GM10248 (cell line): ENCODE measurements at regions of chrX and their contacts with region 1.

Region 1: DNA sequence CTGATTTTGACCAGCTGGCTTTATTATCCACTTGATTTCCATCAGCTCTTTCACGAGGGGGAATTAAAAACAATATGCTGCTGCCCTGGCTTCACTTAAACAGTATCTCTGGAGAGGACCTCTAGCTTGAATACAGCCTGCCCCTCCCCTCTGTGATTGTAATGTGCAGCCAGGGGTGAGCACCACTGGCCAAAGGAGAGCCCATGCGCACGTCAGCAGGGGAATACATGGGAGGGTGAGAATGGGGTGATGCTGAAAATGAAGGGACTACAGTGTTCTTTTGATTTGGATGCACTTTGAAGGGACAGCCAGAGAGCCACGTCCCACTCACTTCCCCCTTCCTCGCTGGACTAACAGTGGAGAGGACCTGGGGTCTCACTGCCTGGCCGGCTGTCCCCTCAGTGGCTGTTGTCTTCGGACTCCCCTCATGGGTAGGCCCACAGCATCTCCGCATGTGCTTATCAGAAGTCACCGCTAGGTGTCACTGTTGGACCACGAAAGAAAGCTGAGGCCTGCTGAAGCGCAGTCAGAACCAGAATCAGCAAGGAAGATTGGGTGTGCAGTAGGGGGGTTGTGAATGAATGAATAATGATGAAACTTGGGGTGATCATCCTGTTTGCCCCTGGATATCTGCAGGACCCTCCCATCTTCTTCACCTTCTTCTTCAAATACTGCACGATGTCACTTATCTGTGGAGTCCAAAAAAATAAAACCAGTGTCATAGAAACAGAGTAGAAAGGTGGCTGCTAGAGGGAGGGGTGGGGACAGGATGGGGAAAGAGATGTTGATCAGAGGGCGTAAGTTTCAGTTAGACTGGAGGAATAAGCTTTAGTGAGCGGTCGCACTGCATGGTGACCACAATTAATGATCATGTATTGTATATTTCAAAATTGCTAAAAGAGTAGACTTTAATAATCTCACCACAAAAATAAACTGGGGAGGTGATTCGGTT is 32.8 kb downstream of the CLCN4 start:
- DNase-seq: peak; percentile 63
- CTCF ChIP-seq: peak; percentile 76

Region 2: GRCh38 chrX:10178866-10179463 is 10.6 kb before region 1 on chrX:
- CTCF ChIA-PET with region 1: interaction called, 34 read pairs
- POLR2A ChIA-PET with region 1: no interaction called
- DNase-seq: no peak
- CTCF ChIP-seq: no peak

Region 3: GRCh38 chrX:10597871-10598270 is 408.3 kb after region 1 on chrX:
- CTCF ChIA-PET with region 1: interaction called, 32 read pairs
- POLR2A ChIA-PET with region 1: no interaction called
- DNase-seq: peak; percentile 28
- CTCF ChIP-seq: peak; percentile 38

Region 4: GRCh38 chrX:10722851-10723250 is 533.3 kb after region 1 on chrX:
- CTCF ChIA-PET with region 1: interaction called, 49 read pairs
- POLR2A ChIA-PET with region 1: no interaction called
- DNase-seq: peak; percentile 54
- CTCF ChIP-seq: peak; percentile 45

Region 5: DNA sequence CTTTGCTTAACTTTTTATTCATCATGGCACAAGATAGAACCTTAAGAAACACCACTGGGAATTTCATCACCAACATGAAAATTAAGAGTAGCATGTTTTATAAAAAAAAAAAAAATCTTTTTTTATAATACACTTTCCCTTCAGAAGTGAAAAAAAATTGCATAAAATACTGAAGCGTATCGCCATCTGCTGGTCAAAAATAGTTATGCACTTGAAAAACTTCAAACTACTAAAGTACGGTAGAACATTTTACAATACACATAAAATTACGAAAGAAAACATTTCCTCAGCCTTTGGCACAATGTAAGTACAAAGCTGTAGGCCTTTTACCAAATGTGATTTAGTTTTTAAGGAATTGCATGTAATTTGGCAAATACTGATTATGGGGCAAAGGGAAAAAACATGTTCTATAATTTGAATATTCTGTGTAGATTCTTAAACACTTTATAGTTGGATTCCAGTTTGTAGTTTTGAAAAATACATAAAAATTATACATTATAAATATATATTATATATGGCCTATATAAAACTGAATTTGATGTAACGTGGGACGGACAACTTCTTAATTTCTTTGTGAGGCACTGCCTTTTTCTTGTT is 948.0 kb after region 1 on chrX:
- CTCF ChIA-PET with region 1: interaction called, 33 read pairs
- POLR2A ChIA-PET with region 1: no interaction called
- DNase-seq: peak; percentile 20
- CTCF ChIP-seq: peak; percentile 19